Motor neuron (in vitro differentiated cells): ENCODE measurements at regions of chr2 and their contacts with region 1.

Region 1: DNA sequence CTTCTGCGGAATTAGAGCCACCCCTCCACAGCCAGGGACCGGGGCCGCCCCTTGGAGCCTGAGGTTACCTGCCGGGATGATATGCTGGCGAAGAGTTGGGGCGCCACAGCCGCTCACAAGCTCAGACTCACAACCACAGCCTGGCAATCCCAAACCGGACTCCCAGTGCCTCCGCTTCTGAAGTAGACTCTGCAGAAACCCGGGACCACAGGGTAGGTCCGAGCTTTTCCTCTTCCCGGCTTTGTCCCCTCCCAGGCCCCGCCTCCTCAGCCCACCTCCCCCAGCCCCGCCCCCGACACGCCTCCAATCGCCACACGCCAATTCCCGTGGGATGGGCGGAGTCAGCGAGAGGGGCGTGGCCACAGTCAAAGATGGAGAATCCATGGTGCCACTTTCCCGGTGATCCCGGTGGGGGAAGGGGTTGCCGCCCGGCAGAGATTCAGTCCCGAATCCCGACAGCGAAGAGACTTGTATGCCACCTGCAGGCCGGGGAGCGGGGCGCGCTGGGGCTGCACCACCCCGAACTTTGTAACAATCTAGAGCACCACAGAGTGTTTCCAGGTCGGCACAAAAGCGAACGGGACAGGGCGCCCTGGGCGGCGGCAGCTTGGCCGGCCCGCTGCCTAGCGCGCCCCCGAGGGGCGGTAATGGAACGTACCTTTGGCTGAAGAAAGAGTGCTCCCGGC is at the start of gene IDH1:
- ATAC-seq: peak; percentile 66 to 84 (median 82)
- H3K4me3 ChIP-seq: peak within 1 kb of the TSS; percentile 64 to 76 (median 72)
- H3K27ac ChIP-seq: peak within 1 kb of the TSS; percentile 76 to 84
- H3K4me1 ChIP-seq: peaks cover 24 to 30% of the 10 kb centered on the region in 2 donors
- total RNA-seq, gene IDH1: 82.9 to 915 (median 210) TPM

Region 2: GRCh38 chr2:208101716-208102631 is 153.0 kb before region 1 on chr2:
- in situ Hi-C with region 1: loop called in 3 of 9 experiments (anchors 25 kb)
- ATAC-seq: peak in 5 of 8 experiments; percentile 37 to 72 (median 57)
- H3K4me3 ChIP-seq: no peak overlapping the region
- H3K27ac ChIP-seq: no peak overlapping the region
- H3K4me1 ChIP-seq: no peaks in the 10 kb centered on the region